ENCODE measurements at regions of chr1 and their contacts with region 1.

Region 1: DNA sequence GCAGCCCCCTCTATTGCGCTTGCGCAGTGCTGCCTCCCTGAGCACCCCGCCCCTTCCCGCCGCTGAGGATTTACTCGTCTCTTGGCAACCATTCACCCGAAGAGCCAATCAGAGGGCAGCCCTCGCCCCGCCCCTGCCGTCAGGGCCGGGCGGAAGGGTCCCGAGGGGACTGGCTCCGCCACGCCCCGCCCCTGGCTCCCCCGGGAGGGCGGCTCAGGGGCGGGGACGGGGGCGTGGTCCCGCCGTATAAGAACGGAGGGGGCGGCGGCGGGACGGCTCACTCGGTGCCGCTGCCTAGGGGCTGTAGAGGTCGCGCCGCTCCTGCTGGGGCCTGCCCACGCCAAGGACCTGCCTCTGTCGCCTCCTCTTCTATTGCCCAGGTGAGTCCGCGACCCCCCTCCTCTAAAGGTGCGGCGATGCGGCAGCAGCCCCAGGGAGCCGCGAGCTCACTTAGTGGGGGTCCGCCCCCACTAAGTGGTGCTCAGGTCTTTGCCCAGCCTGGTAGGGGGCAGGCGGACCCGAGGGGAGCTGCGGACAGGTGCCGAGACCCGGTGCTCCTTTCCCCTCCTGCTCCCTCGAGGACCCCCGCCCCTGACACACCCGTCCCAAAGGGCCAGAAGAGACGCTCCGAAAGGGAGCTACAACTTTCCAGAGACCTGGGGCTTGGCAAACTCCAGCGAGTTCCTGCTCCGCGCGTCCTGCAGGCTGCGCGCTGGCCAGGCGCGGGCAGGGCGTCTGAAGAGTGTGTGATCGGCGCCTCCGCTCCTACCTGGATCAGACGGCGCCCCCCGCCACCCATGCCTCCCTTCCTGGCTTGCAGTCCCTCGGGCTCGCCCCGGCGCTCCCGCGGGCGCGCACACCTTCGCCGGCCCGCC is at the start of gene TENT5C:
- DNase-seq: peak; percentile 97 to 99 (median 99)
- ATAC-seq: peak; percentile 89
- H3K4me3 ChIP-seq: peak within 1 kb of the TSS; percentile 96
- H3K4me3 Mint-ChIP-seq: peak within 1 kb of the TSS; percentile 99
- H3K27ac ChIP-seq: peak within 1 kb of the TSS; percentile 85 to 95
- H3K27ac Mint-ChIP-seq: peak within 1 kb of the TSS; percentile 90
- H3K4me1 ChIP-seq: peaks cover 33% of the 10 kb centered on the region
- H3K4me1 Mint-ChIP-seq: peaks cover 57% of the 10 kb centered on the region
- H3K27me3 ChIP-seq: no peaks in the 10 kb centered on the region
- H3K27me3 Mint-ChIP-seq: no peaks in the 10 kb centered on the region
- CTCF ChIP-seq: no peak
- total RNA-seq, gene TENT5C: 122 to 123 TPM

Region 2: DNA sequence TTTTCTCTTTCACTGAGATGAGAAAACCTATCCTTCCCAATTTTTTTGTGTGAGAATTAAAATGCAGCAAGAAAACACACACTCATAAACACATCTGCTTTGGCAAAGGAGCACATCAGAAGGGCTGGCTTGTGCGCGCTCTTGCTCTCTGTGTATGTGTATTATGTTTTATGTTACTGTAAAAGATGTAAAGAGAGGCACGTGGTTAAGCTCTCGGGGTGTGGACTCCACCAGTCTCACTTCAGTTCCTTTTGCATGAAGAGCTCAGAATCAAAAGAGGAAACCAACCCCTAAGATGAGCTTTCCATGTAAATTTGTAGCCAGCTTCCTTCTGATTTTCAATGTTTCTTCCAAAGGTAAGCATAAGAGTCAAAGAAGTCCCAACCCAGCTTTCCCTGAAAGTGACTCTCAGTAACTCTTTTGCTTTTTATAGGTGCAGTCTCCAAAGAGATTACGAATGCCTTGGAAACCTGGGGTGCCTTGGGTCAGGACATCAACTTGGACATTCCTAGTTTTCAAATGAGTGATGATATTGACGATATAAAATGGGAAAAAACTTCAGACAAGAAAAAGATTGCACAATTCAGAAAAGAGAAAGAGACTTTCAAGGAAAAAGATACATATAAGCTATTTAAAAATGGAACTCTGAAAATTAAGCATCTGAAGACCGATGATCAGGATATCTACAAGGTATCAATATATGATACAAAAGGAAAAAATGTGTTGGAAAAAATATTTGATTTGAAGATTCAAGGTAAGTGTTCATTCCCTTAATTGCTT is 851.6 kb before region 1 on chr1 and contains the start of gene CD2:
- CTCF ChIA-PET with region 1: no interaction called
- POLR2A ChIA-PET with region 1: no interaction called
- intact Hi-C with region 1: loop called in 1 of 2 experiments (anchors 10 kb)
- DNase-seq: peak in 11 of 14 experiments; percentile 47 to 82 (median 60)
- ATAC-seq: peak; percentile 86
- H3K4me3 ChIP-seq: peak within 1 kb of the TSS; percentile 78
- H3K4me3 Mint-ChIP-seq: peak within 1 kb of the TSS; percentile 97
- H3K27ac ChIP-seq: peak within 1 kb of the TSS; percentile 81 to 82
- H3K27ac Mint-ChIP-seq: peak within 1 kb of the TSS; percentile 99
- H3K4me1 ChIP-seq: peaks cover 19% of the 10 kb centered on the region
- H3K4me1 Mint-ChIP-seq: peaks cover 59% of the 10 kb centered on the region
- H3K27me3 ChIP-seq: no peaks in the 10 kb centered on the region
- H3K27me3 Mint-ChIP-seq: no peaks in the 10 kb centered on the region
- CTCF ChIP-seq: peak; percentile 13
- total RNA-seq, gene CD2: 150 to 151 TPM

Region 3: GRCh38 chr1:117121776-117122697 is 484.0 kb before region 1 on chr1:
- CTCF ChIA-PET with region 1: no interaction called
- POLR2A ChIA-PET with region 1: no interaction called
- intact Hi-C with region 1: loop called in 1 of 2 experiments (anchors 10 kb)
- DNase-seq: peak; percentile 69 to 92 (median 78)
- ATAC-seq: peak; percentile 89
- H3K4me3 ChIP-seq: peak overlapping the region; percentile 93
- H3K4me3 Mint-ChIP-seq: peak overlapping the region; percentile 87
- H3K27ac ChIP-seq: no peak overlapping the region
- H3K27ac Mint-ChIP-seq: no peak overlapping the region
- H3K4me1 ChIP-seq: peaks cover 17% of the 10 kb centered on the region
- H3K4me1 Mint-ChIP-seq: peaks cover 9% of the 10 kb centered on the region
- H3K27me3 ChIP-seq: peaks cover 0 to under 1% of the 10 kb centered on the region in 2 experiments
- H3K27me3 Mint-ChIP-seq: peaks cover 7% of the 10 kb centered on the region
- CTCF ChIP-seq: peak; percentile 78

Region 4: GRCh38 chr1:117290890-117291289 is 315.1 kb before region 1 on chr1:
- CTCF ChIA-PET with region 1: no interaction called
- POLR2A ChIA-PET with region 1: no interaction called
- intact Hi-C with region 1: no loop called
- DNase-seq: no peak
- ATAC-seq: no peak
- H3K4me3 ChIP-seq: no peak overlapping the region
- H3K4me3 Mint-ChIP-seq: no peak overlapping the region
- H3K27ac ChIP-seq: no peak overlapping the region
- H3K27ac Mint-ChIP-seq: no peak overlapping the region
- H3K4me1 ChIP-seq: no peaks in the 10 kb centered on the region
- H3K4me1 Mint-ChIP-seq: no peaks in the 10 kb centered on the region
- H3K27me3 ChIP-seq: peaks cover 0 to 5% of the 10 kb centered on the region in 2 experiments
- H3K27me3 Mint-ChIP-seq: no peaks in the 10 kb centered on the region
- CTCF ChIP-seq: no peak

Region 5: GRCh38 chr1:117534995-117535467 is 71.0 kb before region 1 on chr1:
- CTCF ChIA-PET with region 1: interaction called, 7 read pairs
- POLR2A ChIA-PET with region 1: interaction called, 6 read pairs
- intact Hi-C with region 1: loop called (anchors 2 to 5 kb)
- DNase-seq: peak in 13 of 14 experiments; percentile 2 to 82 (median 18)
- ATAC-seq: peak; percentile 95
- H3K4me3 ChIP-seq: no peak overlapping the region
- H3K4me3 Mint-ChIP-seq: no peak overlapping the region
- H3K27ac ChIP-seq: no peak overlapping the region
- H3K27ac Mint-ChIP-seq: no peak overlapping the region
- H3K4me1 ChIP-seq: peaks cover 16% of the 10 kb centered on the region
- H3K4me1 Mint-ChIP-seq: no peaks in the 10 kb centered on the region
- H3K27me3 ChIP-seq: no peaks in the 10 kb centered on the region
- H3K27me3 Mint-ChIP-seq: no peaks in the 10 kb centered on the region
- CTCF ChIP-seq: peak; percentile 64

Region 6: GRCh38 chr1:117664314-117664713 is 58.3 kb after region 1 on chr1:
- CTCF ChIA-PET with region 1: interaction called, 6 read pairs
- POLR2A ChIA-PET with region 1: interaction called, 130 read pairs
- intact Hi-C with region 1: loop called in 1 of 2 experiments (anchors 2 kb)
- DNase-seq: peak in 12 of 14 experiments; percentile 25 to 95 (median 54)
- ATAC-seq: peak; percentile 81
- H3K4me3 ChIP-seq: no peak overlapping the region
- H3K4me3 Mint-ChIP-seq: peak overlapping the region; percentile 13
- H3K27ac ChIP-seq: peak overlapping the region; percentile 27 to 76
- H3K27ac Mint-ChIP-seq: peak overlapping the region; percentile 82
- H3K4me1 ChIP-seq: peaks cover 70% of the 10 kb centered on the region
- H3K4me1 Mint-ChIP-seq: peaks cover 63% of the 10 kb centered on the region
- H3K27me3 ChIP-seq: no peaks in the 10 kb centered on the region
- H3K27me3 Mint-ChIP-seq: peaks cover 4% of the 10 kb centered on the region
- CTCF ChIP-seq: no peak

Region 7: DNA sequence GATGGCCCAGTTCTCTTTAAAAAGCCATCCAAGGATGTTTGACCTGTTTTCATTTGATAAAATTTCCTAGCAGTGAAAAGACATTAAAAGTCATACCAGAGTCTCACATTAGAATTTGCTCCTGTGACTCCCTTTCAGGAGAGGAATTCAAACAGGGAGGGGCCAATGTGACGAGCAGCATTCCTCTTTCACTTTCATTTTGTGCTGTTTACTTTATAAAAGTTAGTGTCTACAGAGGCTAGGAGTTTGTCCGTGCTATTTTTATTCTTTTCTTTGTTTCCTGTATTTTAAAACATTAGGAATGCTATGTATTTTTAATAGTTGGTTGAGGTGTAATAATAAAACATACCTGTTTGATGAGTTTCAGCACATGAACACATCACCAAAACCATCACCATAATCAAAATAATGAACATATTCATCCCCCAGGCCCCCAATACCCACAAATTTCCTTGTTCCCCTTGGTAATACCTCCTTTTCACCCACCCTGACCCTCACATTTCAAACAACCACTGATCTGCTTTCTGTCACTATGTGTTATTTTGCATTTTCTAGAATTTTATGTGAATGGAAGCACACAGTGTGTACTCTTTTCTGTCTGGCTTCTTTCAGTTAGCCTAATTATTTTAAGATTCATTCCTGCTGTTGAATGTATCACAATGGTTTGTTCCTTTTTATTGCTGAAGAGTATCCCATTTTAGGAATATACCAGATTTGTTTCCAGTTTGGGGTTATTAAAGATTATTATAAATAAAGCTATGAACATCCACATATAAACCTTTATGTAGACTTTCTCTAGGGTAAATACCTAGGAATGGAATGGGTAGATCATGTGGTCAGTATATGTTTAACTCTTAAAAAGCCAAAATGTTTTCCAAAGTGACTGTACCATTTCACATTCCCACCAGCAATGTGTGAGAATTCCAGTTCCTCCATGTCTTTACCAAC is 129.3 kb after region 1 on chr1:
- CTCF ChIA-PET with region 1: no interaction called
- POLR2A ChIA-PET with region 1: interaction called, 3 read pairs
- intact Hi-C with region 1: loop called in 1 of 2 experiments (anchors 5 kb)
- DNase-seq: peak in 6 of 14 experiments; percentile 12 to 80 (median 54)
- ATAC-seq: peak; percentile 80
- H3K4me3 ChIP-seq: peak overlapping the region; percentile 50
- H3K4me3 Mint-ChIP-seq: peak overlapping the region; percentile 74
- H3K27ac ChIP-seq: peak overlapping the region; percentile 2 to 57
- H3K27ac Mint-ChIP-seq: peak overlapping the region; percentile 82
- H3K4me1 ChIP-seq: peaks cover 8% of the 10 kb centered on the region
- H3K4me1 Mint-ChIP-seq: peaks cover 24% of the 10 kb centered on the region
- H3K27me3 ChIP-seq: no peaks in the 10 kb centered on the region
- H3K27me3 Mint-ChIP-seq: no peaks in the 10 kb centered on the region
- CTCF ChIP-seq: no peak

Region 8: DNA sequence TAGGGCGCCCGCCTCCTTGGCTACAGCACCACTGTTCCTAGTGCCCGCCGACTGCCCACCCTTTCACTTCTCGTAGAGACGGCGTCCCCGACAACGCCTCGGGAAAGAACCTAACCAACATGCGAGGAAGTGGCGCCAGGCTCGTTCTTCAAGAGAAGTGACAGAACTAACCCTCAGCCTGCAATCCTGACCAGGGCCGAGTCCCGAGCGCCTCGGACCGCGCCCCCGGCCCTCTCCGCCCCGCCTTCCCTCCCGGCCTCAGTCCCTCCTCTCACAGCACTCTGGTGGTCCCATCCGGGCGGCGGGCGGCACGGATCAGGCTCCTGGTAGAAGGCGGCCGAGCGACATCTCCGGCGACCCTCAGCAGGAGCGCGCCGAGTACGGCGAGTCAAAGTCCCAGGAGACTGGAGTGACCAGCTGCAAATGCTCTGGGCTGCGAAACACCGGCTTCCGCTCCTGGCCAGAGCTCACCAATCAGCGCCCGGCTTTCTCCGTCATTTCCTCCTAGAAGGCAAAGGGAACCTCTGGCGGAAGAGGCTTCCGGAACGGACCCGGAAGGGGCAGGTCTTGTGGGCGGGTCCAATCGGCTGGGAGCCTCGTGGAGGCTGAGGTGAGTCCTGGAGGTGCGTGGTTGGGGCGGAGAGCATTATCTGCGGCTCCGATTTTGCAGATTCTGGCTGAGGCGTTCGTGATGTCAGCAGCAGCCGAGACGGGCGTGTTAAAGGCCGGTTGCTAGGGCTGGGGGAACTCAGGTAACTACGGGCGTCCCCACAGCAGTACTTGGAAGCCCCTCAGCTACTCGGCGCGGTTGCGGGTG is 323.4 kb after region 1 on chr1 and contains the starts of genes GDAP2 and WDR3:
- CTCF ChIA-PET with region 1: no interaction called
- POLR2A ChIA-PET with region 1: no interaction called
- intact Hi-C with region 1: loop called in 1 of 2 experiments (anchors 2 kb)
- DNase-seq: peak; percentile 87 to 98 (median 94)
- ATAC-seq: peak; percentile 94
- H3K4me3 ChIP-seq: peak within 1 kb of the TSS; percentile 89
- H3K4me3 Mint-ChIP-seq: peak within 1 kb of the TSS; percentile 96
- H3K27ac ChIP-seq: peak within 1 kb of the TSS; percentile 83 to 90
- H3K27ac Mint-ChIP-seq: peak within 1 kb of the TSS; percentile 92
- H3K4me1 ChIP-seq: peaks cover 21% of the 10 kb centered on the region
- H3K4me1 Mint-ChIP-seq: peaks cover 76% of the 10 kb centered on the region
- H3K27me3 ChIP-seq: no peaks in the 10 kb centered on the region
- H3K27me3 Mint-ChIP-seq: no peaks in the 10 kb centered on the region
- CTCF ChIP-seq: no peak
- total RNA-seq, gene GDAP2: 18.1 to 18.9 TPM
- total RNA-seq, gene WDR3: 5.8 to 7.5 TPM